Mammary epithelial cell (primary cell): ENCODE measurements at regions of chr10 and their contacts with region 1.

Region 1: DNA sequence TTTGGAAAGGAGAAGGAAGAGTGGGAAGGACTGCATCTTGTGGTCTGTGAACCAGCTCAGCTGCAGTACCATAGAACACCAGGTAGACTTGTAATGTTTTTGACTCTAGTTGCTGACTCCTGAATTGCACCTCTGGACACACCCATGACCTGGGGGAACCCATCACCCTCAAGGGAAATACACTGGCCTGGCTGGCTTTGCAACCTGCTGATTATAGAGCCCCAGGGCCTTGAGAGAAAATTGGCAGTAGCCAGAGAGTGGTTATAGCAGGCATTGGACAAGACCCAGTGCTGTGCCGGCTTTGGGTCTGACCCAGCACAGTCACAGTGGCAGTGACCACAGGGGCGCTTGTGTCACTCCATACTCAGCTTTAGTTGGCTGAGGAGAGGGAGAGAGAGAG is 902.3 kb downstream of the GRID1 start:
- DNase-seq: no peak
- H3K4me3 ChIP-seq: no peak overlapping the region
- H3K27ac ChIP-seq: no peak overlapping the region
- H3K4me1 ChIP-seq: no peaks in the 10 kb centered on the region
- H3K27me3 ChIP-seq: no peaks in the 10 kb centered on the region
- CTCF ChIP-seq: no peak

Region 2: DNA sequence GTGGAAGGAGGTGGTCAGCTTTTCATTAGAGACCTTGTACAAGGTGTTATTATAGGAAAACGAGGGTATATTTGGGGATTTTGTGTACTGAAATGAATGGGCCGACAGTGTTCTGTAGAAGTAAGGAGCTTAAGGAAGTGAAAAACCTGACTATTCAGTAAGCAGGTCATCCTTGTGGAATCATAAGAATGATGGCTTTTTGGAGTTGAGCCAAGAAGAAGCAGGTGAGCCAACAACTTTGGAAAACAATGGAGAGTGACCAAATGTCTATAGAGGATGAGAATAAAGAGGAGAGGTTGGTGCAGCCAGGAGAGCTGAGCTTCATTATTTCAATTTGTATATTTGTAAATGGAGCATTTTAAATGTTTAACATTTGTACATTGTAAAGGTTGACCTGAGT is 540.2 kb before region 1 on chr10:
- CTCF ChIA-PET with region 1: no interaction called
- dilution Hi-C with region 1: no loop called
- in situ Hi-C with region 1: no loop called
- intact Hi-C with region 1: loop called (anchors 10 kb)
- DNase-seq: no peak
- H3K4me3 ChIP-seq: no peak overlapping the region
- H3K27ac ChIP-seq: no peak overlapping the region
- H3K4me1 ChIP-seq: no peaks in the 10 kb centered on the region
- H3K27me3 ChIP-seq: no peaks in the 10 kb centered on the region
- CTCF ChIP-seq: no peak

Region 3: GRCh38 chr10:85565381-85565780 is 101.0 kb after region 1 on chr10:
- CTCF ChIA-PET with region 1: no interaction called
- dilution Hi-C with region 1: no loop called
- in situ Hi-C with region 1: no loop called
- intact Hi-C with region 1: no loop called
- DNase-seq: no peak
- H3K4me3 ChIP-seq: no peak overlapping the region
- H3K27ac ChIP-seq: no peak overlapping the region
- H3K4me1 ChIP-seq: no peaks in the 10 kb centered on the region
- H3K27me3 ChIP-seq: no peaks in the 10 kb centered on the region
- CTCF ChIP-seq: no peak

Region 4: GRCh38 chr10:85580585-85580984 is 116.3 kb after region 1 on chr10:
- CTCF ChIA-PET with region 1: no interaction called
- dilution Hi-C with region 1: no loop called
- in situ Hi-C with region 1: no loop called
- intact Hi-C with region 1: no loop called
- DNase-seq: no peak
- H3K4me3 ChIP-seq: no peak overlapping the region
- H3K27ac ChIP-seq: no peak overlapping the region
- H3K4me1 ChIP-seq: no peaks in the 10 kb centered on the region
- H3K27me3 ChIP-seq: no peaks in the 10 kb centered on the region
- CTCF ChIP-seq: no peak

Region 5: GRCh38 chr10:85916994-85917573 is 452.8 kb after region 1 on chr10:
- CTCF ChIA-PET with region 1: no interaction called
- dilution Hi-C with region 1: no loop called
- in situ Hi-C with region 1: no loop called
- intact Hi-C with region 1: no loop called
- DNase-seq: no peak
- H3K4me3 ChIP-seq: no peak overlapping the region
- H3K27ac ChIP-seq: no peak overlapping the region
- H3K4me1 ChIP-seq: no peaks in the 10 kb centered on the region
- H3K27me3 ChIP-seq: no peaks in the 10 kb centered on the region
- CTCF ChIP-seq: no peak